ENCODE measurements at regions of chr5 and their contacts with region 1.

Region 1: DNA sequence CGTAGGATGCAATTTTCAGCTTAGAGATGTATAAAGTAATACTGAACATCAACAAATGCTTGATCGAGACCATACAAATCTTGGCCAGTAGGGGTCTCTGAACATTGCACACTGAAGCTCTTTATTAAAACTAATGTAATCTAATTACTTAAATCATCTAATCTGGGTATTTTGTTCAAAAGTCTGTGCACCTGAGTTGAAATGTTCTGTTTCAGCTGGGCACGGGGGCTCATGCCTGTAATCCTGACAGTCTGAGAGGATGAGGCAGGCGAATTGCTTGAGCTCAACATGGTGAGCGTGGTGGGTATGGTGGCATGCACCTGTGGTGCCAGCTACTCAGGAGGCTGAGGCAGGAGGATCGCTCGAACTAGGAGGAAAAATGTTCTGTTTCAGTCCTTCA is 41.0 kb downstream of the ESM1 start:
- DNase-seq: peak; percentile 45 to 54 (median 54)
- H3K4me3 ChIP-seq: no peak overlapping the region
- H3K4me3 Mint-ChIP-seq: no peak overlapping the region
- H3K27ac ChIP-seq: no peak overlapping the region
- H3K27ac Mint-ChIP-seq: no peak overlapping the region
- H3K4me1 ChIP-seq: no peaks in the 10 kb centered on the region
- H3K4me1 Mint-ChIP-seq: peaks cover 0 to 2% (median under 1%) of the 10 kb centered on the region in 4 donors
- H3K27me3 ChIP-seq: no peaks in the 10 kb centered on the region
- H3K27me3 Mint-ChIP-seq: no peaks in the 10 kb centered on the region

Region 2: DNA sequence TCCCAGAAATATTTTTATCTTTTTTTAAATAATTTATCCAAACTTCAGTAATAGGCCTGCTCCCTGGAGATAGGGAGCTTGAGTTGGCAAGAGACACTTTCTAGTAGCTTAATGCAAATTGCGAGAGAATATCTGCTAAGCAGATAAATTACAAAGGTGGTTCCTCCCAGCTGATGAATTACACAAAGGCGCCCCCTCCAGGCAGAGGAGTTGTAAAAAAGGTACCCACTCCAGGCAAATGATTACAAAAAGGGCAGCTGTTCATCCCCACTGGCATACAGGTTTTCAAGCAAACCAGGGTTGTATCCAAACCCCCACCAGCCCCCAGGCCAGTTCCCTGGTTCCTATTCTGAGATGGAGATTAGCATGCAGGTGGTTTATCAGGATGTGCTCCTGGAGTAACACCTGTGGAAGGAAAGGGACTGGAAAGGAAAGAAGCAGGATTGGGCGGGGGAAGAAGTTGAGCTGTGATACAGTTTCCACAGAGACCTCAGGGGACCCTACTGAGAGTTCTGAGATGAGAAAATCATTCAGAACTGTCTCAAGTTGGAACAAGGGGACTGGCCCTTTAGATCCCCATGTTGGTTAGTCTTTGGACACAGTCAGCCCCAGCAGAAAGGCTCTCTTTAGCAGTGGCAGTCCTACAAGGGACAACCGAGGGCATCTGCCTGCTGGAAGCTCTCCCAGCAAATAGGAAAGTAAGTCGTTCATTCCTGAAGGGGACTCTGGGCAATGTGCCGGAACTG is 15.5 kb after region 1 on chr5:
- CTCF ChIA-PET with region 1: interaction called, 28 read pairs
- POLR2A ChIA-PET with region 1: no interaction called
- intact Hi-C with region 1: no loop called
- DNase-seq: no peak
- H3K4me3 ChIP-seq: no peak overlapping the region
- H3K4me3 Mint-ChIP-seq: no peak overlapping the region
- H3K27ac ChIP-seq: no peak overlapping the region
- H3K27ac Mint-ChIP-seq: no peak overlapping the region
- H3K4me1 ChIP-seq: peaks cover 5% of the 10 kb centered on the region
- H3K4me1 Mint-ChIP-seq: peaks cover 6 to 12% (median 9%) of the 10 kb centered on the region in 4 donors
- H3K27me3 ChIP-seq: no peaks in the 10 kb centered on the region
- H3K27me3 Mint-ChIP-seq: peaks cover 0 to 3% of the 10 kb centered on the region in 2 donors

Region 3: GRCh38 chr5:55037046-55037771 is 92.8 kb after region 1 on chr5:
- CTCF ChIA-PET with region 1: interaction called, 36 read pairs
- POLR2A ChIA-PET with region 1: interaction called, 19 read pairs
- intact Hi-C with region 1: loop called (anchors 1 kb)
- DNase-seq: peak; percentile 36 to 72 (median 54)
- H3K4me3 ChIP-seq: no peak overlapping the region
- H3K4me3 Mint-ChIP-seq: peak overlapping the region in 6 of 8 donors; percentile 25 to 65 (median 49)
- H3K27ac ChIP-seq: peak overlapping the region; percentile 19
- H3K27ac Mint-ChIP-seq: peak overlapping the region; percentile 24 to 96 (median 88)
- H3K4me1 ChIP-seq: peaks cover 25% of the 10 kb centered on the region
- H3K4me1 Mint-ChIP-seq: peaks cover 23 to 42% (median 32%) of the 10 kb centered on the region in 4 donors
- H3K27me3 ChIP-seq: no peaks in the 10 kb centered on the region
- H3K27me3 Mint-ChIP-seq: no peaks in the 10 kb centered on the region

Region 4: DNA sequence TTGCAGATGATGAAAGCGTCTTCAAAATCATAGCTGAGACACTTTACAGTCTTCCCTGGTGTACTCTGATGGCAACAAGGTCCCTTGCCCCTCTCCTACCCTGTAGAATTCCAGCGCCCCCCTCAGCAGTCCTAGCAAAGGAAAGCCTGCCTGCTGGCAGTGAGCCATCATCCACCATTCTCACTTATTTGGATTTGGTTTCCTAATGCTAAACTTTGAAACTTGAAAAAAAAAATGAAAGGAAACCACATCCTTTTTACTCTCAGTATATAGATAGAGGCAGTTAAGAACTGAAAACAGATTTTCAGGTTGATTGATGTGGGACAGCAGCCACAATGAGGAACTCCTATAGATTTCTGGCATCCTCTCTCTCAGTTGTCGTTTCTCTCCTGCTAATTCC is 158.0 kb after region 1 on chr5 and contains the start of gene GZMA:
- CTCF ChIA-PET with region 1: interaction called, 92 read pairs
- POLR2A ChIA-PET with region 1: interaction called, 14 read pairs
- intact Hi-C with region 1: loop called (anchors 1 kb)
- DNase-seq: peak; percentile 66 to 81 (median 76)
- H3K4me3 ChIP-seq: peak within 1 kb of the TSS; percentile 34 to 56
- H3K4me3 Mint-ChIP-seq: peak within 1 kb of the TSS; percentile 83 to 96 (median 90)
- H3K27ac ChIP-seq: peak within 1 kb of the TSS; percentile 32
- H3K27ac Mint-ChIP-seq: peak within 1 kb of the TSS; percentile 78 to 96 (median 91)
- H3K4me1 ChIP-seq: peaks cover 61% of the 10 kb centered on the region
- H3K4me1 Mint-ChIP-seq: peaks cover 58 to 89% (median 75%) of the 10 kb centered on the region in 4 donors
- H3K27me3 ChIP-seq: no peaks in the 10 kb centered on the region
- H3K27me3 Mint-ChIP-seq: no peaks in the 10 kb centered on the region
- total RNA-seq, gene GZMA: 25.0 to 28.2 TPM

Region 5: DNA sequence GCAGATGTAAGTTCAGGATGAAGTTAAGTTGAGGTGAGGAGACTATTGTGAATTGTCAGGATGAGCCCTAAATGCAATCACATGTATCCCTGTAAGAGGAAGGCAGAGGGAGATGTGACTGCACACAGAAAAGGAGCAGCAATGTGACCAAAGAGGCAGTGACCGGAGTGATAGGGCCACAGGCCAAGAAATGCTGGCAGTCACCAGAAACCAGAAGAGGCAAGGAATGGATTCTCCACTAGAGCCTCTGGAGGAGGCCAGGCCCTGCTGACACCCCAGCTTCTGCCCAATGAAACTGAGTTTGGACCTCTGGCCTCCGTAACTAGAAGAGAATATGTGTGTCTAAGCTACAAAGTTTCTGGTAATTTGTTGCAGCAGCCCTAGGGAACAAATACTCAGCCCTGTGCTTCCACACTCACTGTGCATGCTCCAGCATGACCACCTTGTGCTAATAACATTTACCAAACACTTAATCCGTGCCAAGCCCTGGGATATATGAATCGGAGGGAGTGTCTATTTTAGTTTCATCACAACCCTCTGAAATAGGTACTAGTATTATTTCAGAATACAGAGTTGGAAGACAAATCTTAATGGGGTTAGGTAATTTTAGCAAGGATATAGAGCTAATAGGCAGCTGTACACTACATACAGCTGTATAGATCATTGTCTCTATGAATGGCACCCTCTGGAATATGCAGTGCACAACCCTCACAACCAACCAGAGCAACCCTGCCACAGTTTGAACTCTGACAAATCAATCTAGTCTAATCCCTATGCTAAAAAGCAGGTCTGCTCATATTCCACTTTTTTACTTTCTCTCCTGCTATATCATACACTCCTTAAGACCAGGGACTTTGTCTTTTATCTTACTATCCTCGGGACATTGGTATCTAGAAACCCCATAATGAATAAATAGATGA is 207.8 kb after region 1 on chr5:
- CTCF ChIA-PET with region 1: interaction called, 31 read pairs
- POLR2A ChIA-PET with region 1: no interaction called
- intact Hi-C with region 1: no loop called
- DNase-seq: no peak
- H3K4me3 ChIP-seq: no peak overlapping the region
- H3K4me3 Mint-ChIP-seq: no peak overlapping the region
- H3K27ac ChIP-seq: no peak overlapping the region
- H3K27ac Mint-ChIP-seq: no peak overlapping the region
- H3K4me1 ChIP-seq: no peaks in the 10 kb centered on the region
- H3K4me1 Mint-ChIP-seq: no peaks in the 10 kb centered on the region
- H3K27me3 ChIP-seq: no peaks in the 10 kb centered on the region
- H3K27me3 Mint-ChIP-seq: peaks cover 5 to 8% of the 10 kb centered on the region in 2 donors